ENCODE measurements at regions of chr1 and their contacts with region 1.

Region 1: DNA sequence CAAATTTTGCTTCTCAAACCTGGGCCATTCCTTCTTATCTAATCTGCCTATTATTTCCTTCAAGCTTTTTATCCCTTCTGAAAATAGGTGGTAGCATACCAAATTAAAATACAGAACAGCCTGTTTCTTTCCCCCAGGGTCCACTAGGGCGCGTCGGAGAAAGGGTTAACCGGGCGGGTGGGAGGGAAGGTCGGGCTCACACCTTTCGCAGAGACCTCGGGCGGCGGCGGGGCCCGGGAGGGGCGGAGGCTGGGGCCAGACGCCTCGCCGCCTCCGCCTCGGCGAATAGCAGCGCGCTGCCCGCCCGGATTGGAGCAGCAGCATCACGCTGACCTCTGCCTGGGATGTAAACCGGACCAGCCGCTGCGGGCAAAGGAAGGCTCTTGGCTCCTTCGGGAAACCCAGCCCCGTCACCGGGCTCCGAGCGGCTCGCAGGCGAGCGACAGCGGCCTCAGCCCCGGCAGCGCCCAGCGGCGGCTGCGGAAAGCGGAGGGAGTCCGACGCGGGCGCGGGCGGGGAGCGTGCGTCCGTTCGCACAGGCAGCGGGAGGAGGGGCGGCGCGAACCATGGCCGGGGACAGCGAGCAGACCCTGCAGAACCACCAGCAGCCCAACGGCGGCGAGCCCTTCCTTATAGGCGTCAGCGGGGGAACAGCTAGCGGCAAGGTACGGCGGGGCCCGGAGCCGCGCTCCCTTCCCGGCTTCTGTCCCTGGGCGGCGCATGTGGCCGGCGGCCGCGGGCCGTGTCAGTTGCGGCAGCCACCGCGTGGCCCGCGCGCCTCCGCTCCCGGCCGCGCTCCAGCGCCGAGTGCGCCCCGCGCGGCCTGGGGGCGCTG is at the start of gene UCK2:
- DNase-seq: peak; percentile 87
- H3K4me3 Mint-ChIP-seq: peak within 1 kb of the TSS; percentile 99
- H3K27ac Mint-ChIP-seq: peak within 1 kb of the TSS; percentile 88
- H3K4me1 Mint-ChIP-seq: peaks cover 18% of the 10 kb centered on the region
- H3K27me3 Mint-ChIP-seq: no peaks in the 10 kb centered on the region
- CTCF ChIP-seq: no peak
- total RNA-seq, gene UCK2: 106 and 109 TPM in 2 replicates

Region 2: DNA sequence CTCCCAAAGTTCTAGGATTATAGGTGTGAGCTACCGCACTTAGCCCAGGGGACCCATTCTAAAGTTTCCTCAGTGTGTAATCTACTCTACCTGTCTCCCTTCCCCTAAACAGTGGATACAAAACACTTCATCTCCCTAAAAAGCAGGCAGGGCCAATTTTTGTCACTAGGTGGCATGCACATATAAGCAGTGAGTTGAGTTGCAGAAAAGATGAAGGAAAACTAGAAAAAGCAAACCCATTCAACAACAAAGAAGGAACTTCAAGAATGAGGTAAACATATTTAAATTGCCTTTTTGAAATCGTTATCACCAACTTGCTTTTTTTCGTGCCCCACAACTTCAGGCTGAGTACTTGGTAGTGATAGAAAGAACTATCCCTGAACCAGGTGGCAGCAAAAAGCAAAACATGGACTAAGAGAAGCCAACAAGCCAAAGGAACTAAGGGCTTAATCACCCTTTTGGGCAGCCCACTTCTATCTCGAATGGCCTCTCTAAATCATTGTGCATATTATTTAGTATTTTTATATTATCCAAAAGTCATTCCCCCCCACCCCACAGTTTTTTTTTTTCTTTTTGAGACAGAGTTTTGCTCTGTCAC is 109.5 kb before region 1 on chr1:
- CTCF ChIA-PET with region 1: no interaction called
- intact Hi-C with region 1: loop called (anchors 5 kb)
- DNase-seq: peak; percentile 57
- H3K4me3 Mint-ChIP-seq: no peak overlapping the region
- H3K27ac Mint-ChIP-seq: no peak overlapping the region
- H3K4me1 Mint-ChIP-seq: no peaks in the 10 kb centered on the region
- H3K27me3 Mint-ChIP-seq: no peaks in the 10 kb centered on the region
- CTCF ChIP-seq: peak; percentile 43

Region 3: GRCh38 chr1:165768513-165769394 is 58.7 kb before region 1 on chr1 and contains the start of gene TMCO1:
- CTCF ChIA-PET with region 1: interaction called, 7 read pairs
- intact Hi-C with region 1: loop called (anchors 1 kb)
- DNase-seq: peak; percentile 95
- H3K4me3 Mint-ChIP-seq: peak within 1 kb of the TSS; percentile 97
- H3K27ac Mint-ChIP-seq: peak within 1 kb of the TSS; percentile 97
- H3K4me1 Mint-ChIP-seq: peaks cover 45% of the 10 kb centered on the region
- H3K27me3 Mint-ChIP-seq: no peaks in the 10 kb centered on the region
- CTCF ChIP-seq: no peak
- total RNA-seq, gene TMCO1: 145 and 157 TPM in 2 replicates

Region 4: DNA sequence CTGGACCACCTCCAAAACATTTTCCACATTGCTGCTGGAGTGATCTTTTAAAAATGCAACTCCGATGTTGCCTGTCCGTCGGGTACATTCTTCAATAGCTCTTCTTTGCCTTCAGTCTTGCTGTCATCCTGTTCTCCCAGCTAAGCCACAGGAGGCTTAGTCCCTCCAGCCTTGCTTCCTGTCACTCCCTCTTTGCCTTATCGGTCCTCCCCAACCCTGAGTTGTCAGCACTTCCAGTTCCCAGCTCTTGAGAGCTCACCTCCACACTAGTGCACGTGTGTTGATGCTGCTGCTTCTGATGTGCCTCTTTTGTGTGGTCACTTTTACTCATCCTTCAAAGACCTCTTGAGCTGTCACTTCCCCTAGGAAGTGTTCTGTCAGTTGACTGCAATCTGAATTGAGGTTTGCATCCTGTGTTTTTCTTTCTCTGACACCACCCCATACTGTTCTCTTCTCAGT is 15.2 kb after region 1 on chr1:
- CTCF ChIA-PET with region 1: interaction called, 11 read pairs
- intact Hi-C with region 1: no loop called
- DNase-seq: peak; percentile 23
- H3K4me3 Mint-ChIP-seq: peak overlapping the region; percentile 9
- H3K27ac Mint-ChIP-seq: peak overlapping the region; percentile 23
- H3K4me1 Mint-ChIP-seq: peaks cover 64% of the 10 kb centered on the region
- H3K27me3 Mint-ChIP-seq: no peaks in the 10 kb centered on the region
- CTCF ChIP-seq: no peak

Region 5: GRCh38 chr1:165871311-165872067 is 44.0 kb after region 1 on chr1:
- CTCF ChIA-PET with region 1: interaction called, 14 read pairs
- intact Hi-C with region 1: loop called (anchors 1 kb)
- DNase-seq: peak; percentile 67
- H3K4me3 Mint-ChIP-seq: peak overlapping the region; percentile 7
- H3K27ac Mint-ChIP-seq: peak overlapping the region; percentile 27
- H3K4me1 Mint-ChIP-seq: peaks cover 71% of the 10 kb centered on the region
- H3K27me3 Mint-ChIP-seq: no peaks in the 10 kb centered on the region
- CTCF ChIP-seq: peak; percentile 21

Region 6: DNA sequence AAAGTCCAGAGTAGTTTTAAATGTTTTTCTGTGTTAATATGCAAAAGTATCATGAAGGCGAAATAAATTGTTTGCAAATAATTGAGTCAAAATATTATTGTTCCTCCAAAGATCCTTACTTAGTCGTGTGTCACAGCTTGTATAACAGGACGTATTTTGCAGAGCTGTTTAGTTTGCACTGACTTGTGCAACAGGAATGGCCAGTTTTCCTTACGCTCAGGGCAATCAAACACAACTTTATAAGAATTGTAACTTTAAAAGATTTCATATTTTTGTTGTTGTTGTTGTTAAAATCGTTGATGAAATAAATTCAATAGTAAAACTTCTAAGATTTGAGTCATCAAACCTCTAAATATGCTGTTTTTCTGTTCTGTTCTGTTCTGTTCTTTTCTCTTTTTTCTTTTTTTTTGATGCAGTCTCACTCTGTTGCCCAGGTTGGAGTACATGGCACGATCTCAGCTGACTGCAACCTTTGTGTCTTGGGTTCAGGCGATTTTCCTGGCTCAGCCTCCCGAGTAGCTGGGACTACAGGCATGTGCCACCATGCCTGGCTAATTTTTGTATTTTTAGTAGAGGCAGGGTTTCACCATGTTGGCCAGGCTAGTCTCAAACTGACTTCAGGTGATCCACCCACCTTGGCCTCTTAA is 60.5 kb after region 1 on chr1:
- CTCF ChIA-PET with region 1: interaction called, 4 read pairs
- intact Hi-C with region 1: loop called (anchors 1 kb)
- DNase-seq: no peak
- H3K4me3 Mint-ChIP-seq: peak overlapping the region; percentile 51
- H3K27ac Mint-ChIP-seq: peak overlapping the region; percentile 83
- H3K4me1 Mint-ChIP-seq: peaks cover 63% of the 10 kb centered on the region
- H3K27me3 Mint-ChIP-seq: no peaks in the 10 kb centered on the region
- CTCF ChIP-seq: no peak

Region 7: DNA sequence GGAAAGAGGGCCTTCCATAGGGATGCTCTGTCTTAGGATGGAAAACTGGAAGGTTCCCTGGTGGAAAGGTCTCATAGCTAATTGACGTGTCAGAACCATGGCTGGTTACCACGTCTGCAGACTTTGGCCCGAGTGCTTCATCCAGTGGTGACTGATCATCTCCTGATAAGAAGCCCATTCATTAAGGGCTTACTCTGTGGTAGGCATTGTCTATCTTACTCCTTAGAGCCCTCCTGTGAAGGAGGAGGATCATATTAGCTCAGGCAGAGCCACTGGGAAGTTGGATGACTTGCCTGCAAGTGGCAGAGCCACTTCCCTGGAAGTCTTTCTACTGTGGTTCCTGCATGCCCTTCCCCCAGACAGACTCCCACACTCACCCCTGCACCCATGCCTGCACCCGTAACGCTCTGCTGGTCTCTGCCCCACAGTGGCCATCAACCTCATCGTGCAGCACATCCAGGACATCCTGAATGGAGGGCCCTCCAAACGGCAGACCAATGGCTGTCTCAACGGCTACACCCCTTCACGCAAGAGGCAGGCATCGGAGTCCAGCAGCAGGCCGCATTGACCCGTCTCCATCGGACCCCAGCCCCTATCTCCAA is 79.9 kb after region 1 on chr1:
- CTCF ChIA-PET with region 1: interaction called, 6 read pairs
- intact Hi-C with region 1: loop called (anchors 2 kb)
- DNase-seq: no peak
- H3K4me3 Mint-ChIP-seq: no peak overlapping the region
- H3K27ac Mint-ChIP-seq: no peak overlapping the region
- H3K4me1 Mint-ChIP-seq: peaks cover 34% of the 10 kb centered on the region
- H3K27me3 Mint-ChIP-seq: no peaks in the 10 kb centered on the region
- CTCF ChIP-seq: no peak

Region 8: GRCh38 chr1:166153525-166154314 is 326.2 kb after region 1 on chr1:
- CTCF ChIA-PET with region 1: no interaction called
- intact Hi-C with region 1: no loop called
- DNase-seq: no peak
- H3K4me3 Mint-ChIP-seq: no peak overlapping the region
- H3K27ac Mint-ChIP-seq: no peak overlapping the region
- H3K4me1 Mint-ChIP-seq: no peaks in the 10 kb centered on the region
- H3K27me3 Mint-ChIP-seq: peaks cover 16% of the 10 kb centered on the region
- CTCF ChIP-seq: no peak